HEK293 (cell line): ENCODE measurements at regions of chr11 and their contacts with region 1.

Region 1: GRCh38 chr11:128630367-128631230 is 43.2 kb upstream of the ETS1 start:
- H3K4me3 ChIP-seq: no peak overlapping the region
- H3K27ac ChIP-seq: no peak overlapping the region
- H3K4me1 ChIP-seq: no peaks in the 10 kb centered on the region
- CTCF ChIP-seq: 0 out of 2 replicates have a peak, but pooled peaks have one; percentile 26

Region 2: GRCh38 chr11:128172046-128172878 is 458.3 kb before region 1 on chr11:
- CTCF ChIA-PET with region 1: interaction called, 120 read pairs
- POLR2A ChIA-PET with region 1: no interaction called
- H3K4me3 ChIP-seq: no peak overlapping the region
- H3K27ac ChIP-seq: no peak overlapping the region
- H3K4me1 ChIP-seq: peaks cover 3% of the 10 kb centered on the region; the same call in 1 of the 2 replicates
- CTCF ChIP-seq: 0 out of 2 replicates have a peak, but pooled peaks have one; percentile 17

Region 3: GRCh38 chr11:128283451-128283850 is 347.1 kb before region 1 on chr11:
- CTCF ChIA-PET with region 1: interaction called, 76 read pairs
- POLR2A ChIA-PET with region 1: no interaction called
- H3K4me3 ChIP-seq: no peak overlapping the region
- H3K27ac ChIP-seq: no peak overlapping the region
- H3K4me1 ChIP-seq: no peaks in the 10 kb centered on the region; the same call in 1 of the 2 replicates
- CTCF ChIP-seq: no peak

Region 4: DNA sequence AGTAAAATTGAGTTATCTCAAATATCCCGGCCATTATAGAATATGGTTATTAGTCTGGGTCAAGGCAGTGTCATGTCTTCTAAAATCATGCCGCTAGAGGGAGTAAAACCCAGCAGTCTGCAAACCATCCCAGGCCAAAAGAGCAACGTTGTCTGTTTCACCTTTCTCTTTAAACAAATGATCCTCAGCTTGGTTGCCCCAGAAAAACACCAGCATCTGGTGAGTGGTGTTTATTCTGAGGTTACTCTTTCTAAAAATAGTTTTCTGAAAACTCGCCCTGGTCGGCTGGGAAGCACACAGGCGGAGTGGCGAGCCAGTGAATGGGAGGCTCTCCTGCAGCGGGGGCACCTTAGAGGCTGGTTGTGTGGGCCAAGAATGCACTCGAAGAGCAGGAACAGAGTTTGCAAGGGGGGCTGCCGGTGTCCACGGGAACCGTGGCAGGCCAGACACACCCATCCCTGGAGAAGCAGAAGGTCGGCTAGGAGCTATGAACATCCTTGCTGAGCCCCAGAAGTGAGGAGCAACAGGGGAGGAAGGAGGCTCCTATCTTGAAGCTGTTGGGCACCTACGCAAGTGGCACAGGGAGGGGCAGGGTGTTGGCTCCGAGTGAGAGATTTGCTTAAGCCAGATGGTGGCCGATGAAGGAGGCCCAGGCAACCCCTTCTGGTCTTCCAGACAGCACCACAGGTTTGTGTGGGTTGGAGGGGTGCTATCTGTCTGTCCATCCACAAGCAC is 340.3 kb before region 1 on chr11:
- CTCF ChIA-PET with region 1: interaction called, 76 read pairs
- POLR2A ChIA-PET with region 1: interaction called, 7 read pairs
- H3K4me3 ChIP-seq: no peak overlapping the region
- H3K27ac ChIP-seq: no peak overlapping the region; the same call in 1 of the 2 replicates
- H3K4me1 ChIP-seq: no peaks in the 10 kb centered on the region
- CTCF ChIP-seq: no peak

Region 5: GRCh38 chr11:128448200-128448886 is 182.3 kb before region 1 on chr11:
- CTCF ChIA-PET with region 1: no interaction called
- POLR2A ChIA-PET with region 1: no interaction called
- H3K4me3 ChIP-seq: no peak overlapping the region
- H3K27ac ChIP-seq: no peak overlapping the region
- H3K4me1 ChIP-seq: no peaks in the 10 kb centered on the region
- CTCF ChIP-seq: no peak

Region 6: DNA sequence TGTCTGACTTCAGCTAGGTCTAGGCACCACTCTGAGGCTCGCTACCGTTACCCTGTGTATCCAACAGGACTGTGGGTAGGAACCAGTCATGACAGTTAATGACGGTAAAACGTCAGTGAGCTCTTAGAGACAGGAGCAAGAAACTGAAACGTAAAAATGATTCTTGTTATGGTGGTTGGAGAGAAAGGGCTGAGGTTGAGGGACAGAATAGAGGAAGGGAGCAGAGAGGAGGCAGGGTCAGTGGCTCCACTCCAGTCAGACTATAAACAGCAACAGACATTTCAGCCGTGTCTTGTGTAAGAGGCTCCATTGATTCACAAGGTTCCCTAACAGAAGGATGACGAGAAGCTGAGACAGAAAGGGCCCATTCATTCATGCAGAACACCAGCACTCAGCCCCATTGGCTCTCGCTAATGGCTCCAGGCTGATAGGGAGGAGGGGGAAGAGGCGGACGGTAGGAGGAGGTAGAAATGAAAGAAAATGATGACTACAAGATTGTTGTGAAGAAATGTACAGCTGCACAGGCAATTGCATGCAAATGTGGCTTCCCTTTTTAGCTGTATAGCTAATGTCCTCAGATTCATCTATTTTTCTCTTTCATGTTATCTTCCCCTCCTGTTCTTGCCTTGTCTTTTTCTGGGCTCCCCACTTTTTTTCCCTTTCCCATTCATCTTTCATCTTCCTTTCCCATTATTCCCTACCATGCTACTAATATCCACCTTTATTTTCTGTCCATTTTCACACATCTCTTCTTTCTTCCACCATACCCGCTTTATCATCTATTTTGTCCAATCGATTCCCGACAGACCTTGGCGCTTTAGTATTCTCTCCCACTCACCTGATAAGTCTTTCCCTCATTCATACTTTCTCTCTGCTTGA is 77.6 kb before region 1 on chr11:
- CTCF ChIA-PET with region 1: interaction called, 56 read pairs
- POLR2A ChIA-PET with region 1: no interaction called
- H3K4me3 ChIP-seq: no peak overlapping the region
- H3K27ac ChIP-seq: no peak overlapping the region
- H3K4me1 ChIP-seq: no peaks in the 10 kb centered on the region
- CTCF ChIP-seq: no peak

Region 7: DNA sequence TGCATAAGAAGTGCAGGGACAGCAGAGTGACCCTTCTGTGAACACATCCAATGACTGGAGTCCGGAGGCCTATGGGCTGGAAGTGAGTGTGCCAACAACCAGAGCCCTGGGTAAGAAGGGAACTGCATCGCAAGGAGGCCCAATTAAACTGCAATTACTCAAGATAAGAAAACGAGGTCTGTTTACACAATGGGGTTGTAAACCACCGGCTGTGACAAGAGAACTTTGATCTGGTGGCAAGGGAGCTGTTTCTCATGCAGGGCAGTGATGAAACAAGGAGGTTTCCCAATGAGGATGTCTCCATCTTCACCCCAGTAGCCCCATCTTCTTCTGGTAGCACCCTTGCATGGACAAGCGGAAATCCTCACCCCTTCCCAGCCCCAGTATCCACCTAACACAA is 64.7 kb before region 1 on chr11:
- CTCF ChIA-PET with region 1: no interaction called
- POLR2A ChIA-PET with region 1: no interaction called
- H3K4me3 ChIP-seq: no peak overlapping the region
- H3K27ac ChIP-seq: no peak overlapping the region
- H3K4me1 ChIP-seq: peaks cover 7% of the 10 kb centered on the region; the same call in 1 of the 2 replicates
- CTCF ChIP-seq: no peak

Region 8: GRCh38 chr11:128603752-128604414 is 26.7 kb before region 1 on chr11:
- CTCF ChIA-PET with region 1: interaction called, 12 read pairs
- POLR2A ChIA-PET with region 1: no interaction called
- H3K4me3 ChIP-seq: no peak overlapping the region
- H3K27ac ChIP-seq: no peak overlapping the region
- H3K4me1 ChIP-seq: no peaks in the 10 kb centered on the region
- CTCF ChIP-seq: peak; percentile 47; the same call in 1 of the 2 replicates

Region 9: GRCh38 chr11:128831174-128832120 is 200.8 kb after region 1 on chr11:
- CTCF ChIA-PET with region 1: interaction called, 66 read pairs
- POLR2A ChIA-PET with region 1: no interaction called
- H3K4me3 ChIP-seq: no peak overlapping the region
- H3K27ac ChIP-seq: no peak overlapping the region
- H3K4me1 ChIP-seq: no peaks in the 10 kb centered on the region
- CTCF ChIP-seq: no peak